Aorta (tissue), 5 donors: ENCODE measurements at regions of chr15 and their contacts with region 1.

Region 1: GRCh38 chr15:57146506-57147201 is 228.2 kb downstream of the TCF12 start:
- DNase-seq: no peak
- ATAC-seq: peak; percentile 70
- H3K4me3 ChIP-seq: peak overlapping the region in 1 of 2 donors; percentile 72
- H3K27ac ChIP-seq: no peak overlapping the region
- H3K4me1 ChIP-seq: peaks cover 5 to 12% of the 10 kb centered on the region in 2 donors
- H3K27me3 ChIP-seq: no peaks in the 10 kb centered on the region

Region 2: DNA sequence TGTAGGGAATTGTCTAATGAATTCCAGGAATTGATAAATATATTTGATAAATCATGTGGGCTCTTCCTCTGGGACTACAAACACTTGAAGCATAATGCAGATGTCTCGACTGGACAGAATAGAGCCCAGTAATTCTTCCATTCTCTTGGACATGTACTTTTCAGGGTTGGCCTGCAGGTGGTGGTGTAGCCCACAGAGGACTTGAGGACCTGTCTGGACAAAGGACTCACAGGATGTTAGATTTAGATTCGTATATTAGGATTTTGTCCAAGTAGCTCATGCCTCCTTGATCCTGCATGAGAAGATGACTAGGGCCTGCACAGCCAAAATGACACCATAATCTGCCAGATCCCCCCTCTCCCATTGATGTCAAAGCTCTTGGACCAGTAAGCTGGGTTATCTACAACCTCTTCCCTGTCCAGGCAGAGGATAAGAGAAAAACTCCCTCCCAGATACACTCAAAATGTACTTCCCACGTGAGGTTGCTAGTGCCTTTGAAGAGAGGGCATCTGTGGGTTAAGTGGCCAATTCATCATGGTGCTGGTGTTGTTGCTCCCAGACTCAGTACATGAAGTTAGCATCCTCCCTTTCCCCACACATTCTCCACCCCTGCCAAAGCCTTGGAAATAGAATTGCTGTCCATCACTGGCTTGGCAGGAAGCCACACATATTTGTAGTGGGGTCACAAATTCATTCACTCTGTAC is 324.8 kb before region 1 on chr15:
- intact Hi-C with region 1: loop called in 1 of 2 experiments (anchors 10 kb)
- DNase-seq: peak; percentile 68 to 78
- ATAC-seq: peak; percentile 63
- H3K4me3 ChIP-seq: no peak overlapping the region
- H3K27ac ChIP-seq: no peak overlapping the region
- H3K4me1 ChIP-seq: peaks cover 0 to 3% of the 10 kb centered on the region in 2 donors
- H3K27me3 ChIP-seq: no peaks in the 10 kb centered on the region

Region 3: GRCh38 chr15:57218826-57219576 is 72.3 kb after region 1 on chr15:
- intact Hi-C with region 1: loop called in 1 of 2 experiments (anchors 5 kb)
- DNase-seq: no peak
- ATAC-seq: no peak
- H3K4me3 ChIP-seq: no peak overlapping the region
- H3K27ac ChIP-seq: no peak overlapping the region
- H3K4me1 ChIP-seq: peaks cover 0 to 3% of the 10 kb centered on the region in 2 donors
- H3K27me3 ChIP-seq: no peaks in the 10 kb centered on the region

Region 4: DNA sequence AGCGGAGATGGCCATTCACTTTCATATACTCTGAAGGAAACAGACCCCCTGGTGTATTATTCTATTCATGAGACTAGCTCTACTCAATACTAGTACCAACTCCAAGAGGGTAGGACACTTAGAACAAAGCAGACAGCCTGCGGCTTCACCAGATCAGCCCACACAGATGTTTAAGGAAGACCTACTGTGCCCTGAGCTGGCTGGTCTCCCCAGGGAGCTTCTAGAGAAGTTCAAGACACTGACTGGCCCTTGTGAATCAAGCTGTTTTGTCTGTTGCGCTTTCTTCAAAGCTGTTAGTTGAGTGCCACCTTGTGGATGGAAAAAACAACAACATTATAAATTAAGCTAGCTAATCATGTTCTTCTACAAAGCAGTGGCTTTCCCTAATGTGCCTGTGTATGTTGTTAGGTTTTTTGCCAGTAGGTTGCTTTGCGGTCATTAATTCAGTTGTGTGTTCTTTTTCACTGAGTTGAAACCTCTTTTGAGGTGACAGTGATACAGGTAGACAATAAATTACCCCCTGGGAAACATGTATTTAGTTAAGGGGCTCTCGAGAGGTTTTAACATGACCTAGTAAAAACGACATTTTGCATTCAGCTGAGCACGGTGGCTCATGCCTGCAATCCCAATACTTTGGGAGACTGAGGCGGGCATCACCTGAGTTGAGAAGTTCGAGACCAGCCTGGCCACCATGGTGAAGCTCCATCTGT is 380.9 kb after region 1 on chr15:
- intact Hi-C with region 1: loop called in 1 of 2 experiments (anchors 10 kb)
- DNase-seq: peak in 1 of 2 donors; percentile 48
- ATAC-seq: peak; percentile 70
- H3K4me3 ChIP-seq: no peak overlapping the region
- H3K27ac ChIP-seq: no peak overlapping the region
- H3K4me1 ChIP-seq: no peaks in the 10 kb centered on the region
- H3K27me3 ChIP-seq: no peaks in the 10 kb centered on the region